WTC11 (cell line): ENCODE measurements at regions of chr11 and their contacts with region 1.

Region 1: DNA sequence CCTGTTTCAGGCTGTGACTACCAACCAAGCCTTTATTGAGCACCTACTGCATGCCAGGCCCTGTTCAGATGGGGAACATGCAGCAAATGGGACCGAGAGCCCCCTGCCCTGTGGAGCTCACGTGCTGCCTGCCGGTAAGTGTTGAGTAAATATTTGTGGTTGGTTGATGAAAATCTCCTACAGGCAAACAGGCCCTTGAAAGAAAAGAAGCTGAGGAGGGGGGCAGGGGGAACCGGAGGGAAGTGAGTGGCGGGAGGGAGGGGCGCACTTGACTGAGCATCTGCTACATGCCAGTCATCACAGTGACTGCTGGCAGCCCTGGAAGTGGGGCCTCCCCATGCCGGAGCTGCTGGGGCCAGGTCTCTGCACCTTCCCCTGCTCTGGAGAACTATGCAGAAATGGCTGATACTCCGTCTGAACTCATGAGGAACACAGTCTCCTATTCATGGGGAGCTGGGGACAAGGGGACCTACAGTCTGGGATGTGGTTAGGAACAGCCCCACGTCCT is 34.2 kb downstream of the MACROD1 start:
- DNase-seq: no peak
- ATAC-seq: no peak
- H3K4me3 Mint-ChIP-seq: no peak overlapping the region
- H3K27ac Mint-ChIP-seq: no peak overlapping the region
- H3K4me1 Mint-ChIP-seq: peaks cover 47% of the 10 kb centered on the region
- H3K27me3 Mint-ChIP-seq: peaks cover 39% of the 10 kb centered on the region
- CTCF ChIP-seq: no peak

Region 2: DNA sequence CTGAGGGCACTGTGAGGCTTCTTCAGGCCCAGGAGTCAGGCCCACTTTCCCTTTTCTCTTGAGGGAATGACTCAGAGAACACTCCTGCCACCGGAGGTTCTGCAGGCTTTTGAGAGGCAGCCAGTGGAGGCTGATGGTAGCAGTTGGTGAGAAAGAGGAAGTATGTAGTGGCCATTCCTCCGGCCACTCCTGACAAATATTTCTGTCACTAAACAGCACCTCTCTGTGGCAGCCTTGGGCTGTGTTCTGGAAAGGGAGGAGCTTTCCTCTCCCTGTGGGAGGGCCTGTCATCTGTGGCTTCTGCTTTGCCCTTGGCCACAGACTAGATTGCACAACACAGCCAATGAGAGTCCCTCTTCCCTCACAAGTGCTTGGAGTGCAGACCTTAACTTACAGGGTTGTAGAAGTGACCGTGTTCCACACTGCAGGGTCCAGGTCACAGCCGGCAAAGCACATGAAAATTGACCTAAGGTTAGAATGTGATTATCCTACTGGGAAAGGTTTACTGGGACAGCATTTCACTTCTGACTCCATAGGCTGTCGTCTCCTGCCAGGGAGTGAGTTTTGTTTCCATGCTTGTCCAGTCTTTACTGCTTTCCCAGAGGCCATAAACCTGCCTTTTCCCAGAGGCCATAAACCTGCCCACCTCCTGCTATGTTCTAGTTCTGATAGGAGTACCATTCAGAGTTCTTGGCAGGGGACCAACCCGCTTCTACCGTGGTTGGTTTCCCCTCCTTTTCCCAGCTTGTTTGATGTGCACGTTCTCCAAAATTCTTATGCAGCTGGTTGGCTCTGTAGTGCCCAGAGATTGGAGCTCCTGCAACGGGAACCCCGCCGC is 259.6 kb before region 1 on chr11:
- CTCF ChIA-PET with region 1: no interaction called
- POLR2A ChIA-PET with region 1: interaction called, 10 read pairs
- DNase-seq: peak; percentile 55
- ATAC-seq: peak; percentile 86
- H3K4me3 Mint-ChIP-seq: no peak overlapping the region
- H3K27ac Mint-ChIP-seq: peak overlapping the region; percentile 94
- H3K4me1 Mint-ChIP-seq: peaks cover 55% of the 10 kb centered on the region
- H3K27me3 Mint-ChIP-seq: no peaks in the 10 kb centered on the region
- CTCF ChIP-seq: no peak

Region 3: DNA sequence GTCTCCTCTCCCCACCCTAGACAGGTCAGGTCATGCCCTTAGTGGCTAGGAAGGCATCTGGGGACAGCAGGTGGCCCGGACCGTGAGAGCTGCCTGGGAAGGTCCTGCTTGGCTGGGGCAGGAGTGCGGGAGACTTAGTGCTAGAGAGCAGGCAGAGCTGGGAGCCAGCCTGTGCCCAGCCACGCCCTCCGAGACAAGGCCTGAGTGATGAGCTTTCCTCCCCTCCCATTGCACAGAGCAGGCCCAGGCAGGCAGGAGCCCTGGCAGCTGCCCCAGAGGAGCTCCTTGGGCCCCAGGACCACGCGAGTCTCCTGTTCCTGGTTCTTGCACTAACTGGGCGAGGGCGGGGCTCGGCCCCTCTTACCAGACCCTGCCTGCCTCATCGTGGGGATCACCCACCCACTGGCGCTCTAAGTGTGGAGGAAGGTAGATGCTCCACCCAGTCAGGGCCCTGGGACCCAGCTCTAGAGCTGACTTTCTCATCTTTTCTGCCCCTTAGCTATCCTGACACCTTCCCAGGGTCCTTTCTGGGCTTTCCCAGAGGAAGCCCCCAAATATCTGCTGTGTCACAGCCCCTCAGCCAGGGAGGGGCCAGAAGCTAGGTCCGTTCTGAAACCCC is 10.7 kb before region 1 on chr11:
- CTCF ChIA-PET with region 1: interaction called, 11 read pairs
- POLR2A ChIA-PET with region 1: interaction called, 3 read pairs
- DNase-seq: no peak
- ATAC-seq: no peak; the same call in 1 of the 2 replicates
- H3K4me3 Mint-ChIP-seq: no peak overlapping the region
- H3K27ac Mint-ChIP-seq: peak overlapping the region; percentile 60; the same call in 1 of the 2 replicates
- H3K4me1 Mint-ChIP-seq: peaks cover 38% of the 10 kb centered on the region
- H3K27me3 Mint-ChIP-seq: peaks cover 60% of the 10 kb centered on the region
- CTCF ChIP-seq: no peak